ENCODE measurements at regions of chr15 and their contacts with region 1.

Region 1: GRCh38 chr15:39934397-39935071 is 619 bp downstream of the EIF2AK4 start:
- DNase-seq: no peak
- ATAC-seq: peak in 1 of 2 donors; percentile 15
- H3K4me3 ChIP-seq: peak overlapping the region; percentile 76 to 82 (median 78)
- H3K27ac ChIP-seq: peak overlapping the region; percentile 81 to 89 (median 88)
- H3K4me1 ChIP-seq: peaks cover 20 to 22% of the 10 kb centered on the region in 2 donors
- H3K27me3 ChIP-seq: no peaks in the 10 kb centered on the region
- CTCF ChIP-seq: no peak
- POLR2A ChIP-seq: no peak

Region 2: GRCh38 chr15:39801641-39802309 is 132.8 kb before region 1 on chr15:
- in situ Hi-C with region 1: no loop called
- intact Hi-C with region 1: loop called (anchors 5 kb)
- DNase-seq: no peak
- ATAC-seq: no peak
- H3K4me3 ChIP-seq: no peak overlapping the region
- H3K27ac ChIP-seq: no peak overlapping the region
- H3K4me1 ChIP-seq: no peaks in the 10 kb centered on the region
- H3K27me3 ChIP-seq: no peaks in the 10 kb centered on the region
- CTCF ChIP-seq: no peak
- POLR2A ChIP-seq: no peak

Region 3: DNA sequence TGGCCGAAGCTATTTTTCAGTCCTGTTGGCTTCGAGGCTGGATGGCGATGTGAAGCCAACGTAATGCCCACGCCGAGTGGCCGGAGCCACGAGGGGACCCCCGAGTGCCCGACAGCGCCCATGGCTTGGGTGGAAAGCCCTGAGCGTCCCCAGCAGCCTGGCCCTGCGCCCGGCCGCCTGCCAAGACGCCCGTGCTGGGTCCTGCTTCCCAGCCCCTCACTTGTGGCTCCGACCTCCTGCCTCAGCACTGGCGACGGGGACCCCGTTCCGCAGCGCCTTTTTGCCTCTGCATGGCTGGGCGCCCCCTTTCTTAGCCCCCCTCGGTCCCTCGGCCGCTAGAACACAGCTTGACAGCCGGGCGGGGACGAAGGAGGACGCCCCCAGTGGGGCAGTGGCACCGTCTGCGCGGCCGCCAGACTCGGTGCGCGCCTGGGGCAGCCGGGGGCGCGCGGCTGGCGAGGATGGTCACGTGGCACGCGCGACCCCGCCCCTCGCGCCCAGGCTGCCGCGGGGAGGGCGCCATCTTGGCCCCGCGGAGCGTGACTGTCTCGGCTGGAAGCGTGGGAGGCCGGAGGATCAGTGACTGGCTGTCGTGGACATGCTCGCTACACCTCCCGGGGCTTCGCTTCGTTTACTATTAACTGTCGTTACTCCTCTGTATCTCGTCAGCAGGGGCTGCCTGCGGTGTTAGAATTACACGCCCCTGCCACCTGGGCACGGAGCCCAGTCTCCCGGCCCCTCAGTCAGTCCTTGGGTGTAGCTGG is 13.8 kb before region 1 on chr15:
- in situ Hi-C with region 1: no loop called
- intact Hi-C with region 1: loop called (anchors 2 kb)
- DNase-seq: peak; percentile 25 to 47
- ATAC-seq: peak; percentile 77 to 87
- H3K4me3 ChIP-seq: peak overlapping the region; percentile 54 to 95 (median 75)
- H3K27ac ChIP-seq: peak overlapping the region; percentile 43 to 71 (median 66)
- H3K4me1 ChIP-seq: no peaks in the 10 kb centered on the region
- H3K27me3 ChIP-seq: peaks cover 10 to 26% (median 16%) of the 10 kb centered on the region in 3 donors
- CTCF ChIP-seq: peak in 1 of 5 experiments; percentile 16
- POLR2A ChIP-seq: peak in 1 of 2 donors; percentile 37

Region 4: DNA sequence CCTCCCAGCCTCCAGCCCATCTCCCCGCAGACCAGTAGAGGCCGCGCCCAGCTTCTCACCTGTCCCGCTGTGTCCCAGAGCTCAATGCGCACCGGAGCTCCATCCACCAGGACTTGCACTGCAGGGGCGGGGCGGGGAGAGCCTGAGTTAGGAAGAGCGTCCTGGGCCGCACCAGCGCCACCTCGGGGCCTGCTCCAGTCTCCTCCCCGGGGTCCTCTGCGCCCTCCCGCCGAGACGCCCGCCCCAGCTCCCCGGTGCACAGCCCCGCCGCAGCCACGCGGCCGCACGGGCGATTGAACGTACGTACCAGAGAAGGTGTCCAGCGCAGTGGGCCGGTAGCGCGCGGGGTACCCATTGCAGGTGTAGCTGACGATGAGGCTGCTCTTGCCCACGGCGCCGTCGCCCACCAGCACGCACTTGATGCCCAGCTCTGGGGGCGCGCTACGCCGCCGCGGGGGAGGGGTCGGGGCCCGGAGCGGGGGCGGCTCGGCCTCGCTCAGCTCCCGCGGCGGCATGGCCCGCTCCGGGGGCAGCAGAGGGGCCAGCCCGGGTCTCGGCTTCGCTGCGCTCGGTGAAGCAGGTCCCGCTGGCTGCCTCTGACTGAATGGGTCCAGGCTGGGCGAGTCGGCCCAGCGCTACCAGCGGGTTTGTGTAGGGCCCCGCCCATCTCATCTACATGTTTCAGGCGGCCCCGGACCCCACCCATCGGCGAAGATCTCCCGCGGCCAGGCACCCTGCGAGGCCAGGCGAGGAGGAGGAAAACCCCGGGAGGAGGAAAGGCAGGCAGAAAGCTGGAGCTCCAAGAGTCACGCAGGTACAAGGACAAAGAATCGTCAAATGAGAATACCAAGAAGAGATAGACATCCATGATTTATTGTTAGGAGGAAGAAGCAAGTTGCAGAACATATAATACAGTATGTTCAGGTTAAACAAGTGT is 939.4 kb after region 1 on chr15 and contains the start of gene RHOV:
- in situ Hi-C with region 1: no loop called
- intact Hi-C with region 1: no loop called
- DNase-seq: no peak
- ATAC-seq: peak; percentile 14 to 36
- H3K4me3 ChIP-seq: peak within 1 kb of the TSS; percentile 51 to 68 (median 58)
- H3K27ac ChIP-seq: no peak within 1 kb of the TSS
- H3K4me1 ChIP-seq: no peaks in the 10 kb centered on the region
- H3K27me3 ChIP-seq: peaks cover 0 to 11% (median 11%) of the 10 kb centered on the region in 3 donors
- CTCF ChIP-seq: peak in 1 of 5 experiments; percentile 29
- POLR2A ChIP-seq: no peak
- total RNA-seq, gene RHOV: not detected

Measured in gastrocnemius medialis (tissue), 4 donors.